GM10248 (cell line): ENCODE measurements at regions of chr5 and their contacts with region 1.

Region 1: GRCh38 chr5:5421961-5422818 is at the start of gene ICE1:
- DNase-seq: peak; percentile 91
- CTCF ChIP-seq: no peak

Region 2: DNA sequence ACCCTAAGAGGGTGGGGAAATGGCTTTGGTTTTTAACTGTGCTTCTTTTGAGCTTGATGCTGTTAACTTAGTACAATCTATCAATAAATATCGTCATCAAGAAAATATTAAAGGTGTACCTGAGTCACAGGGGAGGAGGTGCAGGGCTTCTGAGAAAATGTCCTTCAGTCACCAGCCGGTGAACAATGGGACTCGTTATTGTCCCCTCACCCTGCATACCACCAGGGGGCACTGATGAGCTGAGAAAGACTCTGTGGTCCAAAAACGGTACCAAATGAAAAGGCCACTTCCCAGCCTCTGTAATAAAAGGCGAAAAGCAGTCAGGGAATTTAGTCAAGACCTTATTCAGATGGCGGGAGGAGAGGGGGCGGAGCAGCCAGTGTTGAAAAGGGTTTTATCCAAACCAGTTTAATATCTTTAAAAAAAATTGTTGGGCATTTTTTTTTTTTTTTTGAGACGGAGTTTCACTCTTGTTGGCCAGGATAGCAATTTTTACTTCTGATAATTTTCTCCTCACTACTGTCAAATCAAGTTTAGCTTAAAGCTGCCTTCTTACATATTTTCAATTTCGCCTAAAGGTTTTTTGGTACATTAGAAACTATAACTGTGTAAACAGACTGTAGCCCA is 554.0 kb before region 1 on chr5:
- CTCF ChIA-PET with region 1: interaction called, 16 read pairs
- POLR2A ChIA-PET with region 1: no interaction called
- DNase-seq: peak; percentile 70
- CTCF ChIP-seq: peak; percentile 80

Region 3: DNA sequence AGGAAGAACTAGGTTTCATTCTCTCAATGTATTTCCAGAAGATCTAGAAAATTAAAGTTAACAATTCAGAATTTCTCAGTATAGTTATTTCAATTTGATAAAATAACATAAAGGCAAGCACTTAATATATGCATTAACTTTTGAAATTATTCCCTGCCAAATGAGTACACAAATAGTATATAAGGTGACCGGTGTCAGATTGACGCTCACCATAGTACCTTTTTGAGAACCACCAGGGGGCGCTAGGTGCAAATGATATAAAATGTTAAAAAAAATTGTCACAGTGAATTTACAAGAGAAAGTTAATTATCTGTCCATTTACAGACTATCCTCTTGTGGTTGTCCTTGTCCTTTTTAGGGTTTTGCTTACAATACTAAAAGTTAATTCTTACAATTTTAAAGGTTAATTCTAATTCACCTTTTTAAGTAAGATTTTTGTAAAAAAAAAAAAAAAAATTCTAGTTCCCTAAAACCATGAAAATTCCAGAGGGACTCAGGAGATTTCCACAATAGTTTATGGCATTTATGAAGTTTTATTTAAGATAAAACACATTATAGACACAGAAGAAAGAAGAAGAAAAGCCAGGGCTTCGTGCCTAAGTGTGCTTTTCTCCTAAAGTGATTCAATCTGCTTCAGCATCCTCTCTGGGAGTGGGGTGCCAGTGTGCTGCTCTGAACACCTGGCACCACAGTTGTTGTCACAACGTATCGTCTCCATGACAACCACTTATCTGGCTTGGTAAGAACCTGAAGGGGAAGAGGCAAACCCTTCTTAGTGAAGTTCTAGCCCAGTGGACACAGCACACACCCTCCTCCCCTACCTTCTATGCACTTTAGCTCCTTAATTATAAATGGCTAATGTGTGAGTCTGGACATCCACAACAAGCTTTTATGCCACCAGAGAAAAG is 280.3 kb before region 1 on chr5:
- CTCF ChIA-PET with region 1: interaction called, 26 read pairs
- POLR2A ChIA-PET with region 1: no interaction called
- DNase-seq: peak; percentile 31
- CTCF ChIP-seq: peak; percentile 64

Region 4: GRCh38 chr5:5437227-5438172 is 15.3 kb after region 1 on chr5:
- CTCF ChIA-PET with region 1: interaction called, 10 read pairs
- POLR2A ChIA-PET with region 1: no interaction called
- DNase-seq: no peak
- CTCF ChIP-seq: no peak